Right ventricle myocardium inferior (tissue), 1 donor: ENCODE measurements at regions of chr2 and their contacts with region 1.

Region 1: DNA sequence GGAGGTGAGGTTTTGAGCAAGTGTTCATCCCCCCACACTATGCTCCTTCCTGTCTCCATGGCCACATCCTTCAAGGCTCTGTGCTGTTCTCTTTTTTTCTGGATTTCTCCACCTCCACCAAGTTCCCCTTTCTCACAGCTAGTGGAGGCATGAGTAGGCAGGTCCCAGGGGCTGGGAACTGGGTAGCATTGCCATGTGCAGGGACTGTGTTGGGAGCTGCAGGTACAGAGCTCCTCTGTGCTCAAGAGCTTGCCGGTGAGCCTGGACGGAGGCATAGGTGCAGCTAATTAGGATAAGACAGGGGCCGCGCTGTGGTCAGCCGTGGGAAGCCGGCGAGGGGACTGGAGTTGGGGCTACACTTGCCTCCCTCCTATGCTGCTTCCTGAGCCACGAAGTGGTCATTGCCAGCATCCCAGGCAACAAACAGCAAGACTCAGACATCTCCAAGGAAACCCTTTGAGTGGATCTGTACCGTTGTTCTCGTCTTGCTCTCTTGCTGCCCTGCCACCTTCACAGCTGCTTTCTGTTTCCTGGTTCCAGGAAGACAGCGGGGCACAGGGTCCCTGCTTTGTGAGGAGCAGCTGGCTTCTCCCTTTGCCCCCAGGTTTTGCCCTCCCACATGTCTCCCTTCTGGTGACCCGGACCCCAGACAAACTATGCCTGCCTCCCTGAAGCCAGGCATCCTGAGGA is 36.9 kb downstream of the ATOH8 start:
- DNase-seq: peak; percentile 51
- ATAC-seq: no peak

Region 2: DNA sequence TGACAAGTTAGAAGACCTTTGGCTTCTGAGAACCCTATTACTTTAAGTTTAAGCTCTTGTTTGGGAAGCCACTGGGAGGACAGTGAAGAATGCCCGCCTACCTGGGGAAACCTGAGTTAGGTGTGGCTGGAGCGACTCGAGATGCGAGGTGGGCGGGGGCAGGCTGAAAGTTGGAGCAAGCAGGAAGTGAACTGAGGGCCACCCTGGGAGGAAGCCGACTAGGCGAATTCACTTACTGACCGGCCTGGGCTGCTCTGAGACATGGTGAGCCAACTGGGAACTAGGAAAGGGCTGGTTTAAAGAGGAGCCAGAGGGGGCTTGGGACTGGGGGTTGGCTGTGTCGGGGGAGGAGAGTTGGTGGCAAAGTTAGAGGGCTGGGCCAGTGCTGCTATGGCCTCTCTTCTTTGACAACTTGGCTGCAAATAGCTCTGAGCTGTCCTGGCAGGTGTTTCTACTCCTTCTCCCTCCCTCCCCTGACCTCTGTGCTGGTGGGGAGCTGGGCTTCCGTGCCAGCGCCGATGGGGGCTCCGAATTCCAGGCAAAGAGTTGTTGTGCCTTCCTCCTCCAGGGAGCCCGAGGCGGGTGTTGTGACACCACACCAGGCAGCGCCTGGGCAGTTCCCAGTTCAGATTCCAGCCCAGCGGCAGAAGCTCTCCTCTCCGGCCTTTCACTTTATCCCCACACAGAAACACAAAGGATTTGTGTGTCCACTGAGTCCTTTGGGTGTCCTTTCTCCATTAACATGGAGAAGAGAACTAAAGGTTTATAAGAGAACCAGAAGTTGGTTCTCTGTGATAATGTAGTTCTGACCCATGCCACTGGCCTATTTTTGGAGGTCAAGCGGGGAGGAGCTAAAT is 213.0 kb before region 1 on chr2 and contains the start of gene VAMP8:
- intact Hi-C with region 1: no loop called
- DNase-seq: no peak
- ATAC-seq: peak; percentile 35
- total RNA-seq, gene VAMP8: 26.1 TPM

Region 3: DNA sequence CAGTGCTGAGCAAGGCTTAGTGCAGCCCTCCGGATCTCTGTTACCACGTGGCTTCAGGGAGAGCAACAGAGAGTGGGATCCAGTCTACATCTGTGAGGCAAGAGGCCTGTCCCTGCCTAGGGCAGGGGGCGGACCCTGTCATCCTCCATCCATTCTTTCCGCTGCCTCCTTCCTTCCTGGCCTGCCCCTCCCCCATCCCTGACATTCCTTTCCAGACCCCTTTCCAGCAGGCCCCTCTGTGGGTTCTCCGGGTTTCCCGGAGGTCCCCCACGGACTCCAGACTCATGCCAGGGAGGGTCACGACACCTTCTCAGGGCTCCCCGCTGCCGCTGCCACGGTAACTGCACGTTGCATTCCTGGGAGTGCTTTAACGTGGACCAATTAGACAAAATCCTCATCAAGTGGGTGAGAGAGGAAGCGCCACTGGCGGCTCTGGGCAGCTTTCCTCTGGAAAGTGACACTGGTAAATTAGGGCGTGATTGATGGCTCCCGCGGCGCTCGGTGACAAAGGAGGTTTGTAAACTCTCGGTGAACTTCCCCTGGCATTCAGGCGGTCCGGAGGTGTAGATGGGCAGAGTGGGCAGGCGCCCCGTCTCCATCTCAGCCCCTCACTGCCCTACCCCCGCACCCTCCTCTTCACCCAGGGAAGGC is 25.4 kb before region 1 on chr2:
- intact Hi-C with region 1: no loop called
- DNase-seq: no peak
- ATAC-seq: peak; percentile 17

Region 4: DNA sequence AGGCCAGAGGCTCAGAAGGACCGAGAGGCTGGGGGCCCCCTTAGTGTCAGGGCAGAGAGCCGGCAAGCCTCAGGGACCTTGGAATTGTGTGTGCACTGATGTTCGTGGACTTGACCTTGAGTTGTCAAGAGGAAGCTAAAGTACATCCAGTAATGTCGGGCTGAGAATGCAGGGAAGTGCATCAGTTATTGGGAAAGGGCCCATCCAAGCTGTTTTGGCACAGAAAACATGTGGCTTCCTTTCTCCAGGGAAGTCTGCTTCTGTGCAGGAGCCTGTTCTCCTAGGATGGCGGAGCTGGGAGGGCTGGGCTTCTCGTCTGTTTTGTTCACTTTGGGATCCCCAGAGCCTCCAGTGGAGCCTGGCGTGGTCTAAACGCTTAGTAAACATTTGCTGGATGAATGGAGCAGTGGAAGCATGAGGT is 13.2 kb before region 1 on chr2:
- intact Hi-C with region 1: loop called (anchors 2 kb)
- DNase-seq: peak; percentile 78
- ATAC-seq: peak; percentile 61

Region 5: GRCh38 chr2:86337244-86337836 is 546.7 kb after region 1 on chr2 and contains the start of gene REEP1:
- intact Hi-C with region 1: no loop called
- DNase-seq: peak; percentile 68
- ATAC-seq: peak; percentile 82
- total RNA-seq, gene REEP1: 23.6 TPM